ENCODE measurements at regions of chr22 and their contacts with region 1.

Region 1: DNA sequence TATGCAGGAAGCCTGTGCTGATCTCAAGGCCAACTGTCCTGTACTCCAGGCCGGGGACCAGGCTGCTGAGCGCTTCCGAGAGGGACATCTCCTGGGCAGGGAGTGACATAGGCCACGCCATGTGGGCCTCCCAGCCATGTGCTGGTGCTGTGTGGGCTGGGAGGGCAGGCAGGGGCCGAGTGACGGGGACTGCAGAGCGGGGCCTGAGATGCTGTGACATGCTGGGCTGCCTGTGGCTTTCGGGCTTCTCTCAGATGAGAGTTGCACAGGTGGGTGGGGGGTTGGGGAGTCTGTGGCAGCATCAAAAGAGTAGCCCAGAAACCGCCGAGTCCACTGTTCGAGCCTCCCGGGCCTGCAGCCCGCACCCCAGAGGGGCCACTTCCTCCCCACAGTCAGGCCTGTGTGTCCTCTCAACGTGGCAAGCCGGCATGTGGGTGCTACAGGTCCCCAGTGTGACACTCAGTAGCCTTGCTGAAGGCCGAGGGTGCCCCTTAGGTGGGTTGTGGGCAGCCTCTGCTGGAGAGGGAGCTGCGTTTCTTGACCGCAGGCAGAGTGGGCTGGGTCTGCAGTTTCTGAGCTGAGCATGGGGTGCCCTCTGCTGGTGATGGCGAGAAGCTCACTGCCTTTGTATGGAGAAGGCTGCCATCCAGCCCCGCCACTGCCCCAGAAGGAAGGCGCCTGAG is 101.2 kb downstream of the BCR start:
- DNase-seq: peak; percentile 60 to 88 (median 85)
- ATAC-seq: peak; percentile 67
- H3K4me3 ChIP-seq: no peak overlapping the region
- H3K4me3 Mint-ChIP-seq: no peak overlapping the region
- H3K27ac ChIP-seq: peak overlapping the region in 1 of 2 experiments; percentile 23
- H3K27ac Mint-ChIP-seq: no peak overlapping the region
- H3K4me1 ChIP-seq: peaks cover 24% of the 10 kb centered on the region
- H3K4me1 Mint-ChIP-seq: peaks cover 20% of the 10 kb centered on the region
- H3K27me3 ChIP-seq: no peaks in the 10 kb centered on the region
- H3K27me3 Mint-ChIP-seq: no peaks in the 10 kb centered on the region
- CTCF ChIP-seq: peak; percentile 94

Region 2: GRCh38 chr22:23187871-23188700 is 93.5 kb before region 1 on chr22:
- CTCF ChIA-PET with region 1: interaction called, 17 read pairs
- POLR2A ChIA-PET with region 1: no interaction called
- intact Hi-C with region 1: no loop called
- DNase-seq: no peak
- ATAC-seq: no peak
- H3K4me3 ChIP-seq: no peak overlapping the region
- H3K4me3 Mint-ChIP-seq: no peak overlapping the region
- H3K27ac ChIP-seq: no peak overlapping the region
- H3K27ac Mint-ChIP-seq: peak overlapping the region; percentile 43
- H3K4me1 ChIP-seq: peaks cover 21% of the 10 kb centered on the region
- H3K4me1 Mint-ChIP-seq: peaks cover 73% of the 10 kb centered on the region
- H3K27me3 ChIP-seq: no peaks in the 10 kb centered on the region
- H3K27me3 Mint-ChIP-seq: no peaks in the 10 kb centered on the region
- CTCF ChIP-seq: no peak

Region 3: DNA sequence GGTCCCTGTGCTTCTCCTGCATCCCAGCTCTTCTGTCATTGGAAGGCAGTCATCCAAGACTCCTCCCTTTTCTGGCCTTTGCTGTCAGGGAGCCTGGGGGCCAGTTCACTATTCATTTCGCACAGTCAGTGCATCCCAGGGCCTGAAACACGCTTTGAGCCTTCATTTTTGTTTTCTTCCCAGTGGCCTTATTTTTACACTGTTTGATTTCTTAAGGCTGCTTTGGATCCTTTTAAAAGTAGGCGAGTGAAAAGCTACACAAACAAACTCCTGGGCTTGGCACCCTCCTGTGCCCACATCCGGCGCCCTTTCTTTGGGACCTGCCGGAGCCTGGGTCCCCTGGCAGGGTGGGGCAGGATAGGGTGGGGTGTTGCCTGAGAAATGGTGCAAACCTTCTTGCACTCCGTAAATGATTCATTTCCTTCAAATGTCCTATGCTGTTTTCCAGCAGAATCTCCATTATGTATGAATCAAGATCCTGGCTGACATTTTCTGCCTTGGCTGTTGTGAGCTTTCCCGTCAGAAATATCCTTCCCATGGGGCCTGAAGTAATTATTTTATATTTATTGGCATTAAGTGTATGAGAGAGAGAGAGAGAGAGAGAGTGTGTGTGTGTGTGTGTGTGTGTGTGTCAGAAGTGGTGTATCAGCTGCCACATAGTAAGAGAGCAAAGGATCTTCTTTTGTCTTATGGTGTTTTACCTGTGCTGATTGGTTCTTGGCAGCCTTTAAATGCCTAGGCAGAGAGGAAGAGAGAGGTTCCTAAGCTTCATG is 55.6 kb before region 1 on chr22:
- CTCF ChIA-PET with region 1: interaction called, 12 read pairs
- POLR2A ChIA-PET with region 1: no interaction called
- intact Hi-C with region 1: no loop called
- DNase-seq: peak in 7 of 9 experiments; percentile 32 to 73 (median 53)
- ATAC-seq: peak; percentile 80
- H3K4me3 ChIP-seq: no peak overlapping the region
- H3K4me3 Mint-ChIP-seq: peak overlapping the region; percentile 38
- H3K27ac ChIP-seq: peak overlapping the region; percentile 26 to 55
- H3K27ac Mint-ChIP-seq: peak overlapping the region; percentile 70
- H3K4me1 ChIP-seq: peaks cover 77% of the 10 kb centered on the region
- H3K4me1 Mint-ChIP-seq: peaks cover 76% of the 10 kb centered on the region
- H3K27me3 ChIP-seq: no peaks in the 10 kb centered on the region
- H3K27me3 Mint-ChIP-seq: no peaks in the 10 kb centered on the region
- CTCF ChIP-seq: no peak

Measured in CD8-positive, alpha-beta T cell (primary cell).